ENCODE measurements at regions of chr11 and their contacts with region 1.

Region 1: GRCh38 chr11:128522055-128522942 is 65.1 kb downstream of the ETS1 start:
- DNase-seq: peak; percentile 87 to 93
- ATAC-seq: peak; percentile 76 to 93 (median 83)
- H3K4me3 ChIP-seq: peak overlapping the region; percentile 93
- H3K4me3 Mint-ChIP-seq: peak overlapping the region; percentile 98
- H3K27ac ChIP-seq: peak overlapping the region; percentile 90
- H3K27ac Mint-ChIP-seq: peak overlapping the region; percentile 98 to 99
- H3K4me1 ChIP-seq: peaks cover 34% of the 10 kb centered on the region
- H3K4me1 Mint-ChIP-seq: peaks cover 62 to 70% of the 10 kb centered on the region in 2 donors
- H3K27me3 ChIP-seq: no peaks in the 10 kb centered on the region
- H3K27me3 Mint-ChIP-seq: no peaks in the 10 kb centered on the region
- CTCF ChIP-seq: no peak

Region 2: GRCh38 chr11:128195057-128195751 is 327.1 kb before region 1 on chr11:
- intact Hi-C with region 1: loop called (anchors 5 kb)
- DNase-seq: peak in 1 of 2 donors; percentile 83
- ATAC-seq: peak; percentile 60 to 70 (median 61)
- H3K4me3 ChIP-seq: no peak overlapping the region
- H3K4me3 Mint-ChIP-seq: peak overlapping the region; percentile 67
- H3K27ac ChIP-seq: no peak overlapping the region
- H3K27ac Mint-ChIP-seq: peak overlapping the region; percentile 74 to 76
- H3K4me1 ChIP-seq: peaks cover 33% of the 10 kb centered on the region
- H3K4me1 Mint-ChIP-seq: peaks cover 67 to 75% of the 10 kb centered on the region in 2 donors
- H3K27me3 ChIP-seq: no peaks in the 10 kb centered on the region
- H3K27me3 Mint-ChIP-seq: no peaks in the 10 kb centered on the region
- CTCF ChIP-seq: no peak

Region 3: GRCh38 chr11:128323381-128323780 is 198.9 kb before region 1 on chr11:
- intact Hi-C with region 1: loop called (anchors 1 kb)
- DNase-seq: peak in 1 of 2 donors; percentile 81
- ATAC-seq: no peak
- H3K4me3 ChIP-seq: no peak overlapping the region
- H3K4me3 Mint-ChIP-seq: peak overlapping the region; percentile 77
- H3K27ac ChIP-seq: peak overlapping the region; percentile 83
- H3K27ac Mint-ChIP-seq: peak overlapping the region; percentile 93 to 95
- H3K4me1 ChIP-seq: peaks cover 72% of the 10 kb centered on the region
- H3K4me1 Mint-ChIP-seq: peaks cover 82 to 84% of the 10 kb centered on the region in 2 donors
- H3K27me3 ChIP-seq: no peaks in the 10 kb centered on the region
- H3K27me3 Mint-ChIP-seq: no peaks in the 10 kb centered on the region
- CTCF ChIP-seq: peak; percentile 24

Region 4: GRCh38 chr11:128506999-128507611 is 15.2 kb before region 1 on chr11:
- intact Hi-C with region 1: loop called (anchors 2 kb)
- DNase-seq: peak in 1 of 2 donors; percentile 60
- ATAC-seq: peak; percentile 42 to 57 (median 49)
- H3K4me3 ChIP-seq: peak overlapping the region; percentile 18
- H3K4me3 Mint-ChIP-seq: peak overlapping the region; percentile 98
- H3K27ac ChIP-seq: peak overlapping the region; percentile 67
- H3K27ac Mint-ChIP-seq: peak overlapping the region; percentile 98 to 99
- H3K4me1 ChIP-seq: peaks cover 77% of the 10 kb centered on the region
- H3K4me1 Mint-ChIP-seq: peaks cover 99 to 100% of the 10 kb centered on the region in 2 donors
- H3K27me3 ChIP-seq: no peaks in the 10 kb centered on the region
- H3K27me3 Mint-ChIP-seq: no peaks in the 10 kb centered on the region
- CTCF ChIP-seq: no peak

Region 5: DNA sequence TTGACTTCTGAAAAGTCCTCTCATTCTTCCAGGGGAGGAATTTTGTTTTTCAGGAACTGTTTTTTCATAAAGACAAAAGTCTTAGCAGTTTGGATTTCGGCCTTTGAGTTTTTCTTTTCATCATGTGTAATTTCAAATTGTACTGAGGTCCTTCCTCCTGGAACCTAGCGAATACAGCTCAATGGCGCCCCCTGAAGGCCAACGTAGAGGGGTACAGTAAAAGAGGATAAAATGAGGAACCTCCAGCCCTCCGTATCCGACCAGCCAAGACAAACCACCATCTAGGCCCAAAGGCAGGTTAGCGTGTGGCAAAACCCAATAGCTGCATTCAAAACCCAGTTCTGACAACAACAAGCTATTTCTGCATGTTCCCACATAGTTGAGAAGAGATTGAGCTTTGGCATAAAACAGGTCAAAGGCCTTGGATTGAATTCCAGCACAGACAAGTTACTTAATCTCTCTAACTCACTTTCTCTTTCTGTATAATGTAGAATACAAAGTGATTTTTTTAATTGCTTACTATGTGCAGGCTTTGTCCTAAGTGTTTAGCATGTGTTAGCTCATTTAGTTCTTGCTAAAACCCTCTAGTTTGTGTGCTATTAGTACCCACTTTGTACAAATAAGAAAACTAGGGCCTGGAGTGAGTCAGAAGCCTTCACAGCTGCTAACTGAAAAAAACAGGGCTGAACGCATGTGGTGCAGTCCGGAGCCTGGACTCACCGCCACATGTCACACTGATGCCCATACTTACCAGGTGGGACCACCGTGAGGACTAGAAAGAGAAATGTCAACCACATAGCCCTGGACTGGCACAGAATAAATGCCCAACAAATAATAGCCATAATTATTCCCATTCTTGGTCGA is 108.3 kb after region 1 on chr11:
- intact Hi-C with region 1: loop called (anchors 1 kb)
- DNase-seq: peak; percentile 90 to 97
- ATAC-seq: peak; percentile 66 to 88 (median 68)
- H3K4me3 ChIP-seq: no peak overlapping the region
- H3K4me3 Mint-ChIP-seq: peak overlapping the region; percentile 59
- H3K27ac ChIP-seq: peak overlapping the region; percentile 59
- H3K27ac Mint-ChIP-seq: peak overlapping the region; percentile 93 to 97
- H3K4me1 ChIP-seq: peaks cover 55% of the 10 kb centered on the region
- H3K4me1 Mint-ChIP-seq: peaks cover 55 to 67% of the 10 kb centered on the region in 2 donors
- H3K27me3 ChIP-seq: no peaks in the 10 kb centered on the region
- H3K27me3 Mint-ChIP-seq: no peaks in the 10 kb centered on the region
- CTCF ChIP-seq: peak; percentile 86

Region 6: GRCh38 chr11:128757235-128757711 is 235.0 kb after region 1 on chr11:
- intact Hi-C with region 1: loop called (anchors 5 kb)
- DNase-seq: peak; percentile 64 to 89
- ATAC-seq: peak; percentile 90 to 93 (median 92)
- H3K4me3 ChIP-seq: no peak overlapping the region
- H3K4me3 Mint-ChIP-seq: peak overlapping the region; percentile 72
- H3K27ac ChIP-seq: peak overlapping the region; percentile 24
- H3K27ac Mint-ChIP-seq: peak overlapping the region; percentile 88 to 93
- H3K4me1 ChIP-seq: peaks cover 60% of the 10 kb centered on the region
- H3K4me1 Mint-ChIP-seq: peaks cover 81 to 88% of the 10 kb centered on the region in 2 donors
- H3K27me3 ChIP-seq: no peaks in the 10 kb centered on the region
- H3K27me3 Mint-ChIP-seq: no peaks in the 10 kb centered on the region
- CTCF ChIP-seq: peak; percentile 73